ENCODE measurements at regions of chr4 and their contacts with region 1.

Region 1: GRCh38 chr4:39458505-39459300 is at the starts of genes LIAS and RPL9:
- DNase-seq: peak; percentile 93 to 95
- H3K4me3 ChIP-seq: peak within 1 kb of the TSS; percentile 97
- H3K27ac ChIP-seq: peak within 1 kb of the TSS; percentile 94
- H3K4me1 ChIP-seq: peaks cover 20% of the 10 kb centered on the region
- H3K27me3 ChIP-seq: no peaks in the 10 kb centered on the region
- CTCF ChIP-seq: no peak
- total RNA-seq, gene LIAS: 16.3 and 16.4 TPM in 2 replicates
- total RNA-seq, gene RPL9: 792 and 1,023 TPM in 2 replicates

Region 2: GRCh38 chr4:37826295-37827029 is 1632.2 kb before region 1 on chr4 and contains the start of gene PGM2:
- CTCF ChIA-PET with region 1: no interaction called
- POLR2A ChIA-PET with region 1: interaction called, 21 read pairs
- intact Hi-C with region 1: no loop called
- DNase-seq: peak; percentile 64 to 83
- H3K4me3 ChIP-seq: peak within 1 kb of the TSS; percentile 91
- H3K27ac ChIP-seq: peak within 1 kb of the TSS; percentile 54
- H3K4me1 ChIP-seq: peaks cover 20% of the 10 kb centered on the region
- H3K27me3 ChIP-seq: no peaks in the 10 kb centered on the region
- CTCF ChIP-seq: no peak
- total RNA-seq, gene PGM2: 27.3 and 32.5 TPM in 2 replicates

Region 3: GRCh38 chr4:38759113-38759789 is 699.5 kb before region 1 on chr4:
- CTCF ChIA-PET with region 1: no interaction called
- POLR2A ChIA-PET with region 1: no interaction called
- intact Hi-C with region 1: loop called (anchors 5 kb)
- DNase-seq: peak in 1 of 2 experiments; percentile 36
- H3K4me3 ChIP-seq: no peak overlapping the region
- H3K27ac ChIP-seq: no peak overlapping the region
- H3K4me1 ChIP-seq: no peaks in the 10 kb centered on the region
- H3K27me3 ChIP-seq: no peaks in the 10 kb centered on the region
- CTCF ChIP-seq: peak; percentile 86

Region 4: GRCh38 chr4:38856524-38857337 is 602.0 kb before region 1 on chr4 and contains the start of gene TLR6:
- CTCF ChIA-PET with region 1: no interaction called
- POLR2A ChIA-PET with region 1: no interaction called
- intact Hi-C with region 1: no loop called
- DNase-seq: peak; percentile 60 to 69
- H3K4me3 ChIP-seq: peak within 1 kb of the TSS; percentile 25; the same call in 1 of the 2 replicates
- H3K27ac ChIP-seq: peak within 1 kb of the TSS; percentile 93
- H3K4me1 ChIP-seq: peaks cover 26% of the 10 kb centered on the region
- H3K27me3 ChIP-seq: no peaks in the 10 kb centered on the region
- CTCF ChIP-seq: peak; percentile 83
- total RNA-seq, gene TLR6: 7.9 and 9.3 TPM in 2 replicates

Region 5: GRCh38 chr4:38872604-38873006 is 586.1 kb before region 1 on chr4:
- CTCF ChIA-PET with region 1: no interaction called
- POLR2A ChIA-PET with region 1: no interaction called
- intact Hi-C with region 1: loop called (anchors 10 kb)
- DNase-seq: peak; percentile 41 to 49
- H3K4me3 ChIP-seq: no peak overlapping the region
- H3K27ac ChIP-seq: no peak overlapping the region
- H3K4me1 ChIP-seq: peaks cover 22% of the 10 kb centered on the region
- H3K27me3 ChIP-seq: no peaks in the 10 kb centered on the region
- CTCF ChIP-seq: no peak

Region 6: GRCh38 chr4:39415678-39416283 is 42.9 kb before region 1 on chr4:
- CTCF ChIA-PET with region 1: no interaction called
- POLR2A ChIA-PET with region 1: interaction called, 20 read pairs
- intact Hi-C with region 1: no loop called
- DNase-seq: no peak
- H3K4me3 ChIP-seq: no peak overlapping the region
- H3K27ac ChIP-seq: no peak overlapping the region
- H3K4me1 ChIP-seq: no peaks in the 10 kb centered on the region
- H3K27me3 ChIP-seq: no peaks in the 10 kb centered on the region
- CTCF ChIP-seq: no peak

Region 7: GRCh38 chr4:39427520-39428114 is 31.1 kb before region 1 on chr4:
- CTCF ChIA-PET with region 1: no interaction called
- POLR2A ChIA-PET with region 1: no interaction called
- intact Hi-C with region 1: no loop called
- DNase-seq: no peak
- H3K4me3 ChIP-seq: no peak overlapping the region
- H3K27ac ChIP-seq: no peak overlapping the region
- H3K4me1 ChIP-seq: no peaks in the 10 kb centered on the region
- H3K27me3 ChIP-seq: no peaks in the 10 kb centered on the region
- CTCF ChIP-seq: no peak

Region 8: DNA sequence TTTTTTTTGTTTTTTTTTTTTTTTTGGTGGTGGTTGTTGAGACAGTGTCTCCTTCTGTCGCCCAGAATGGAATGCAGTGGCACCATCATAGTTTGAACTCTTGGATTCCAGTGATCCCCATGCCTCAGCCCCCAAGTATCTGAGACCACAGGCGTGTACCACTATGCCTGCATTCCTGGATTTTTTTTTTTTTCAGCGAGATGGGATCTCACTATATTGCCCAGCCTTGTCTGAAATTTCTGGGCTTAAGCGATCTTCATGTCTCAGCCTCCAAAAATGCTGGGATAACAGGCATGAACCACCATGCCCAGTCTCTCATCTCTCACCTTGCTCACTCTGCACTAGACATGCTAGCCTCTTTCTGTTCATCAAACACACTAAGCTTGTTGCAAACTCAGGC is 343.3 kb after region 1 on chr4:
- CTCF ChIA-PET with region 1: no interaction called
- POLR2A ChIA-PET with region 1: no interaction called
- intact Hi-C with region 1: no loop called
- DNase-seq: no peak
- H3K4me3 ChIP-seq: no peak overlapping the region
- H3K27ac ChIP-seq: no peak overlapping the region
- H3K4me1 ChIP-seq: no peaks in the 10 kb centered on the region
- H3K27me3 ChIP-seq: no peaks in the 10 kb centered on the region
- CTCF ChIP-seq: no peak

Region 9: GRCh38 chr4:39961311-39961877 is 502.7 kb after region 1 on chr4:
- CTCF ChIA-PET with region 1: no interaction called
- POLR2A ChIA-PET with region 1: interaction called, 12 read pairs
- intact Hi-C with region 1: no loop called
- DNase-seq: no peak
- H3K4me3 ChIP-seq: no peak overlapping the region
- H3K27ac ChIP-seq: no peak overlapping the region
- H3K4me1 ChIP-seq: no peaks in the 10 kb centered on the region
- H3K27me3 ChIP-seq: no peaks in the 10 kb centered on the region
- CTCF ChIP-seq: no peak